Endothelial cell of umbilical vein (primary cell): ENCODE measurements at regions of chr4 and their contacts with region 1.

Region 1: GRCh38 chr4:73019462-73020047 is 50.0 kb downstream of the COX18 start:
- DNase-seq: peak; percentile 56
- H3K4me3 ChIP-seq: no peak overlapping the region
- H3K27ac ChIP-seq: no peak overlapping the region
- H3K4me1 ChIP-seq: no peaks in the 10 kb centered on the region
- H3K27me3 ChIP-seq: peaks cover 0 to 2% of the 10 kb centered on the region in 2 experiments
- CTCF ChIP-seq: peak; percentile 50 to 51
- POLR2A ChIP-seq: no peak

Region 2: DNA sequence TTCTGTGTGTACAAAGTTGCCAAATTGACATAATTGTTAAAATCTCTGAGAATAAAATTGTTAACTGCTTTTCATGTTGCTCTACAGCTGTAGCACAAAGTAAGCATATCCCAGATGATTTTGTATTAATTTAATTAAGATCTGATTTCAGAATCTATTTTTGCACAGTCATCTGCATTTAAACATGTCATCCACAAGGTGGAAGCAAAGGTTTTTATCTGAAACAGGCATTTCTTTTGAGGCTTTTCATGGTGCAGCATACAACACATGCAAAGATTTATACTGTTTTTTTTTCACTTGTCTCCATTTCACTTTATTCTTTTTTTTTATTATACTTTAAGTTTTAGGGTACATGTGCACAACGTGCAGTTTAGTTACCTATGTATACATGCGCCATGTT is 1286.8 kb before region 1 on chr4:
- CTCF ChIA-PET with region 1: no interaction called
- POLR2A ChIA-PET with region 1: no interaction called
- dilution Hi-C with region 1: no loop called
- intact Hi-C with region 1: loop called (anchors 10 kb)
- DNase-seq: peak; percentile 14
- H3K4me3 ChIP-seq: no peak overlapping the region
- H3K27ac ChIP-seq: no peak overlapping the region
- H3K4me1 ChIP-seq: no peaks in the 10 kb centered on the region
- H3K27me3 ChIP-seq: no peaks in the 10 kb centered on the region
- CTCF ChIP-seq: peak in 1 of 2 donors; percentile 7
- POLR2A ChIP-seq: no peak

Region 3: DNA sequence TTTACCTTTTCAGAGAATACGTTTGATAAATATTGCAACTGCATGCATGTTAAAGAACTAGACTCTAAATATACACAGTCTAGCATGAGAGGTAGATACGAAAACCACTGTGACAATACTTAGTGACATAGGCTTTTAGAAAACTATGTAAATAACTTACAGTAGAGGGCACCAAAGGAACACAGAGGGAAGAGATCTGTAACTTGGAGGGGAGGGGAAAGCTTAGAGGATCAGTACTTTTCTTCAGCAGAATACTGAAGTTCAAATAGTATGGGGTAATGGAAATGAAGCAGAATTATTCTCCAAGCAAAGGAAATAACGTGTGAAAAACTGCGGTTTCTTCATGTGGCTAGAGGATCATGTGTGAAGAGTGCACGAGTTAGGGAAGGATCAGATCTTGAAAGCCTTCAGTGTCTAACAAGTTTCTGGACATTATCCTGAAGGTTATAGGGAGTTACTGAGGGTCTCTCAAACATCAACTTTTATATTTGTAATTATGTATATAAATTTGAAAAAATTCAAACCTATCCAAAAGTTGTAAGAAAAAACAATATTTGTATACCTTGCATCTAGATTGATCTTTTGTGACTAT is 723.5 kb before region 1 on chr4:
- CTCF ChIA-PET with region 1: interaction called, 7 read pairs
- POLR2A ChIA-PET with region 1: no interaction called
- dilution Hi-C with region 1: no loop called
- intact Hi-C with region 1: loop called (anchors 1 kb)
- DNase-seq: peak; percentile 56
- H3K4me3 ChIP-seq: no peak overlapping the region
- H3K27ac ChIP-seq: no peak overlapping the region
- H3K4me1 ChIP-seq: no peaks in the 10 kb centered on the region
- H3K27me3 ChIP-seq: no peaks in the 10 kb centered on the region
- CTCF ChIP-seq: peak; percentile 34 to 44
- POLR2A ChIP-seq: no peak

Region 4: GRCh38 chr4:72505314-72505744 is 514.2 kb before region 1 on chr4:
- CTCF ChIA-PET with region 1: interaction called, 72 read pairs
- POLR2A ChIA-PET with region 1: no interaction called
- dilution Hi-C with region 1: no loop called
- intact Hi-C with region 1: loop called (anchors 1 kb)
- DNase-seq: peak; percentile 52
- H3K4me3 ChIP-seq: no peak overlapping the region
- H3K27ac ChIP-seq: no peak overlapping the region
- H3K4me1 ChIP-seq: no peaks in the 10 kb centered on the region
- H3K27me3 ChIP-seq: peaks cover 0 to 3% of the 10 kb centered on the region in 2 experiments
- CTCF ChIP-seq: peak; percentile 58 to 75
- POLR2A ChIP-seq: no peak

Region 5: DNA sequence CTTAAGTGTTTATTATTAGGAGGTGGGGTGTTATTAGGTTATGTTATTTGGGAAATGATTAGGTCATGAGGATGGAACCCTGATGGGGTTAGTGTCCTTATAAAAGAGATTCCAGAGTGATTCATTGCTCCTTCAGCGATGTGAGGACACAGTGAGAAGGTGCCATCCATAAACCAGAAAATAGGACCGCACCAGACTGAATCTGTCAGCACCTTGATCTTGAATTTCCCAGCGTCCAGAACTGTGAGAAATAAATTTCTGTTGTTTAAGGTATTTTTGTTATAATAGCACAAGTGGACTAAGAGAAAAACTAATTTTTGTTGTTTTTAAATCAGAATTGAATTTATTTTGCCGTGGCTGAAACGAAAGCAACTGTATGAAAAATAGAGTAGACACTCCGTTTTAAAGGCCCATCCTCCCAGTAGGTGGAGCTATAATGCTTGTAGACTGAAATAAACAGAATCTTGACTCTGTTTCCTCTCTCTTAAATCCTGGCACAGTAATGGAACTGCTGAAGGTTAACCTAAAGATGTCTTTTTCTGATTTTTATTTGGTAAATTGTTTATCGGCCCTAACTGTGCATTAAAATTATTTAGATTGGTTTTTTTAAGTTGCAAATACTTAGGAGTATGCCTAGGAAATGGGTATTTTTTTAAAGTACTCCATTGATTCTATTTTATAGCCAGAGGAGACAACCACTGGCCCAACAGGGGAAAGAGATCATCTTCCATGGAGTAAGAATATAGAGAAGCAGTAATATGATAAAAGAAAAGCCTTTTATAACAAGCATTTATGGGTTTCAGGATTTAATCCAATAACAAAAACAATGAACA is 317.4 kb before region 1 on chr4:
- CTCF ChIA-PET with region 1: interaction called, 12 read pairs
- POLR2A ChIA-PET with region 1: no interaction called
- dilution Hi-C with region 1: no loop called
- intact Hi-C with region 1: loop called (anchors 1 kb)
- DNase-seq: peak; percentile 69
- H3K4me3 ChIP-seq: peak overlapping the region; percentile 30 to 85 (median 73)
- H3K27ac ChIP-seq: peak overlapping the region; percentile 1
- H3K4me1 ChIP-seq: no peaks in the 10 kb centered on the region
- H3K27me3 ChIP-seq: no peaks in the 10 kb centered on the region
- CTCF ChIP-seq: peak; percentile 30 to 47
- POLR2A ChIP-seq: no peak

Region 6: GRCh38 chr4:72886602-72887001 is 133.0 kb before region 1 on chr4:
- CTCF ChIA-PET with region 1: interaction called, 4 read pairs
- POLR2A ChIA-PET with region 1: no interaction called
- dilution Hi-C with region 1: no loop called
- intact Hi-C with region 1: loop called (anchors 5 kb)
- DNase-seq: peak; percentile 21
- H3K4me3 ChIP-seq: no peak overlapping the region
- H3K27ac ChIP-seq: no peak overlapping the region
- H3K4me1 ChIP-seq: no peaks in the 10 kb centered on the region
- H3K27me3 ChIP-seq: no peaks in the 10 kb centered on the region
- CTCF ChIP-seq: peak; percentile 4 to 25
- POLR2A ChIP-seq: no peak